Ovary (tissue), 10 donors: ENCODE measurements at regions of chr1 and their contacts with region 1.

Region 1: DNA sequence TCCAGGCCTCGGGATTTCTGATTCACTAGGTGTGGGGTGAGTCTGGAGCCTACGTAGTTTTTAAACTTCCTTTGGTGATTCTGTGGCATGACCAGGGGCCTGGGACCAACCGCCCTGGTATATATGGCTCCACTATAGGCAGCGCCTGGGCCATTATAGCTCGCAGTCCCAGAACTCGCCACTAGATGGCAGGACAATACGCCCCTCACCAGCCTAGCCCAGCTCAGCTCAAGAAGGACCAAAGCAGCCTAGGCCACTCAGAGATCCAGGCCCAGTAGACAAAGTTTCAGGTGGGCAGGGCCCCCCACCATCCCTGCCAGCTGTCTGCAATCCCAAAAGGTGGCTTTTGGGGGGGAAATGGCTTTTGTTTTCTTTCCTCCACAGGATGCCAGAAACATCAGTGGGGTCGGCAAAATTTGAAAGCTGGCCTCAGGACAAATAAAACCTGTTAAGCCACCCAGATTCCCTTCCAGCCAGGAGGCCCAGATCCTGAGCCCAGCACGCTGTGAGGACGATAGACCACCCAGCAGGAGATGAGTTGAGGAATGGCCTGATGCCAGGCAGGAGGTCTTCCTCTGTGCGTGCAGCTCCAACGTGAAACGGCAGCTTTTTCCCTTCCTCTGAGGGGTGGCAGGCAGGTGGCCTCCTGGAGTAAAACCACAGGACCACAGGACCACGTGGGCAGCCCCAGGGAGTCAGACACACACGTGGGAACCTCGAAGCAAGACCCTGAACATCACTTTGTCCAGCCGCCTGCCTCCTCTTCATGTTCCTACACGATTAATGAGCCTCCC is 24.8 kb upstream of the TMEM51 start:
- DNase-seq: peak; percentile 47 to 79 (median 75)
- H3K4me3 ChIP-seq: no peak overlapping the region
- H3K27ac ChIP-seq: no peak overlapping the region
- H3K4me1 ChIP-seq: no peaks in the 10 kb centered on the region
- H3K27me3 ChIP-seq: no peaks in the 10 kb centered on the region
- CTCF ChIP-seq: peak; percentile 54 to 82 (median 75)
- EP300 ChIP-seq: no peak
- POLR2A ChIP-seq: no peak

Region 2: GRCh38 chr1:15272009-15272788 is 143.5 kb after region 1 on chr1:
- intact Hi-C with region 1: loop called in 1 of 4 experiments (anchors 5 kb)
- DNase-seq: peak; percentile 58 to 75 (median 63)
- H3K4me3 ChIP-seq: no peak overlapping the region
- H3K27ac ChIP-seq: no peak overlapping the region
- H3K4me1 ChIP-seq: peaks cover 1% of the 10 kb centered on the region
- H3K27me3 ChIP-seq: no peaks in the 10 kb centered on the region
- CTCF ChIP-seq: peak; percentile 44 to 84 (median 80)
- EP300 ChIP-seq: no peak
- POLR2A ChIP-seq: no peak

Region 3: DNA sequence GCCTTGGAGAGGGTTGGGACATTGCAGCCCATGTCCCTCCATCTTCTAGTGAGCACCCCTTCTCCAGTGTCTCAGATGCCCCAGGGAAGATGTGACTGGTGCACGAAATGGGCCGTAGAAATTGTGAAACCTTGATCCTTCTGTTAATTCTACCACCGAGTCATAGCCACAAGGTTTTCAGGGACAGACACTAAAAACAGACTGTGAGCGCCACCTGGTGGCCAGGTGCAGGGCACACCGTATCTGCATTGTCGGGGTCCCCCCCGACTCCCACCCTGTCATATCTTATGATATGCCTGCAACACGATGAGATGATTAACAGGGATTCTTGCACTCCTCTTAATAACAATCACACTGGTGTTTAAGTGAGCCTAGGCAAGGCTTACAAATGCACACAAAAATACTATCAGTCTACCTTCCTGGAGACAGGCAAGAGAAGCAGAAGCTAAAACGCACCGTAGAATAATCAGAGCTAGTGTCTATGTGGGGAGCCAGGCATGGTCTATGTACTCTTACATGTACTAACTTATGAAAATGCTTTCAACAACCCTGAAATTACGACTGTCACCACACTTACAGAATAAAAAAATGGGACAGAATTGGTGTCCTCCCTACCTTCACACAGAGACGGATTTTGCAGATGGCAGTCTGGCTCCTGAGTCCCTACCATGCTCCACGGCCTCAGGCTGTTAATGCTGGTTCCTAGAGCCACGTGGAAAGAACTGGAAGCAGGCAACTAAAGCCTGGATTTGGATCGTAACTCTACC is 176.2 kb after region 1 on chr1:
- intact Hi-C with region 1: loop called in 2 of 4 experiments (anchors 5 kb)
- DNase-seq: peak; percentile 64 to 85 (median 73)
- H3K4me3 ChIP-seq: no peak overlapping the region
- H3K27ac ChIP-seq: no peak overlapping the region
- H3K4me1 ChIP-seq: peaks cover 2% of the 10 kb centered on the region
- H3K27me3 ChIP-seq: no peaks in the 10 kb centered on the region
- CTCF ChIP-seq: peak; percentile 68 to 78 (median 77)
- EP300 ChIP-seq: no peak
- POLR2A ChIP-seq: no peak